ENCODE measurements at regions of chr18 and their contacts with region 1.

Region 1: DNA sequence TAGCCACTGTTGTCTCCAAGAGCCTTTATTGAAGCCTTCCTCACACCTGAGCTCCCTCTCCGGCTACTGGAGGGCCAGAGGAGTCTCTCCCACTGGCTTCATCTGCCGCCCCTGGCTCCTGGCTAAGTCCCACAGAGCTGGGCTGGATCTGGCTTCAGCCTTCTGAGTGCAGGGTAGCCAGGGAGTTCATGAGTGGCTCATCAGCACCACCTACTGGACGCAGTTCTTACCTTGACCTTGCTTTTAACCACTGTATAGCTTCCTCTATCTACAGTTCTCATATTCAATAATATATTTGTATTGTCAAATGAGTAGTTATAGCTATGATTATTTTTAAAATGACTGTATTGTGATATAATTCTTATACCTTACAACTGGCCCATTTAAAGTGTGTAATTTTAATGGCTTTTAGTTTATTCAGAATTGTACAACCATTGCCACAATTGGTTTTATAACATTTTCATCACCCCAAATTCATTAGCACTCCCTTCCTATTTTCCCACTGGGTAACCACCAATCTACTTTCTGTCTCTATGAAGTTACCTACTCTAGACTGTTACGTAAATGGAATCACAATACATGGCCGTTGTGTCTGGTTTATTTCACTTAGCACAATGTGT is 17.7 kb downstream of the CNDP1 start:
- DNase-seq: peak; percentile 84
- H3K4me3 Mint-ChIP-seq: no peak overlapping the region
- H3K27ac Mint-ChIP-seq: no peak overlapping the region
- H3K4me1 Mint-ChIP-seq: peaks cover 5% of the 10 kb centered on the region
- H3K27me3 Mint-ChIP-seq: peaks cover 40% of the 10 kb centered on the region
- CTCF ChIP-seq: peak; percentile 82

Region 2: GRCh38 chr18:72700961-72701718 is 1850.9 kb before region 1 on chr18:
- CTCF ChIA-PET with region 1: no interaction called
- POLR2A ChIA-PET with region 1: no interaction called
- intact Hi-C with region 1: loop called (anchors 2 kb)
- DNase-seq: peak; percentile 40
- H3K4me3 Mint-ChIP-seq: no peak overlapping the region
- H3K27ac Mint-ChIP-seq: no peak overlapping the region
- H3K4me1 Mint-ChIP-seq: no peaks in the 10 kb centered on the region
- H3K27me3 Mint-ChIP-seq: no peaks in the 10 kb centered on the region
- CTCF ChIP-seq: peak; percentile 61

Region 3: DNA sequence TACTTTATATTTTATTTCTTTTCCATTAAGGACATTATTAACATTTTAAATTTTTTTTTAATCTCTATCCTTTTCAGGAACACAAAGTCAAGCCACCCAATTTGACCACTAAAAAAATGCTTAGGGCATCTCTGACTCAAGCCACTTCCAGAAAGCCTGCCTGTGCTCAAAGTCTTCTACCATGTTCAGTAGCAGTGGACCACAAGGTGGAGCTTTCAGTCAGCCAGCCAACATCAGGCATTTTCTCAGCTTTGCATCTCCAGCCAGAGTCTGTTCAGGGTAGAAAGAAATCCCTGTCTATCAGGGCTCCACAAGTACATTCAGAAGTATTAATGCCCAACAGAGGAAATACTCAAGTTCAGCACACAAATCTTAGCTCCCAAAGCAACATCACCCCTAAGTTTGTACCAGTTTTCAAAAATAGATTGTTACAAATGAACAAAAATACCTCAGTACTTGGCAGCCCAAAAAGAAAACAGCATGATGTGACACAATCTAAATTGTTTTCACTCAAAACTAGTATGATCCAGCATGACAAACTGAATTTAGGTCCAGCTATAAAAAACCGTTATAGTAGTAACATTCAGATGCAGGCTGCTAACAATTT is 198.8 kb before region 1 on chr18:
- CTCF ChIA-PET with region 1: interaction called, 87 read pairs
- POLR2A ChIA-PET with region 1: interaction called, 4 read pairs
- intact Hi-C with region 1: loop called (anchors 1 kb)
- DNase-seq: peak; percentile 61
- H3K4me3 Mint-ChIP-seq: no peak overlapping the region
- H3K27ac Mint-ChIP-seq: no peak overlapping the region
- H3K4me1 Mint-ChIP-seq: no peaks in the 10 kb centered on the region
- H3K27me3 Mint-ChIP-seq: peaks cover 40% of the 10 kb centered on the region
- CTCF ChIP-seq: peak; percentile 55

Region 4: DNA sequence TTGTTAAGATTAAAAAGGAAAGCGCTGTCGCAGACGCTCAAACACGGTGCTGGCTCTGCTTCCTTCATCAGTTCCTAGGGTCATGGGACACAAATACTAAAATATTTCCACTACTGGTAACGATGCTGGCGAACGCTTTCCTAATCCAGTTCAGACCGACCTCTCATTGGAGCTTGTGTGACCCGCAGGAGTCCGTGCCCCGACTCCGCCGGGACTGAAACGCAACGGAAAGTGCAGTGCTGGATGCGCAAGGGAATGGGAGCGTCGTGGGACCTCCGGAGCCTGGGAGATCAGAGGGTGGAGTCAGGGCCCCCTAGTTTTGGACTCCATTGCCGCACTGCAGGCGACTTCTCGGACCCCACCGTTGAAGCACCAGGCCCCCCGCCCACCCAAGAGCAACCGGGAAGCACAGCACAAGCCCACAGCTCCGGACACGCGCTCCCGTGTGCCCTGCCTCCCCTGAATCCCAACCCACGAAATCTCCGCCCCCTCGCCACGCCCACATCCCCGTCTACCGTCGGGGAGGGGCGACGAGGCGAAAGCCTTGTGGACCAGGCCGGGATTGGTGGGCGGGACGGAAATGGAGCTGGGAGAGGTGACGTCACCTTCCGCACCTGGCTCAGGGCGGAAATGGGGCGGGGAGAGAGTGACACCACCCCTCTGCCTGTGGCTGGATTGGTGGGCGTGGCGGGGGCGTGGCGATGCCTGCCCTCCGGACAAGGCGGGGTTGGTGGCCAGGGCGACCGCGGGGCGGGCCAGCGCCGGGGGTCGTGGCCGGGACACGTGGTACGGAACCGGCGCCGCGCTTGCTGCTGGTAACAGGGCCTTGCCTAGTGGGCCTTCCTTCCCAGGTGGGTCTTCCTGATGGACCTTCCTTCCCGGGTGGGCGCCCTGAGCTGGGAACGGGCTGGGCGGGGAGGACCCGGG is 56.2 kb before region 1 on chr18 and contains the start of gene CNDP2:
- CTCF ChIA-PET with region 1: interaction called, 57 read pairs
- POLR2A ChIA-PET with region 1: interaction called, 8 read pairs
- intact Hi-C with region 1: loop called (anchors 2 kb)
- DNase-seq: peak; percentile 99
- H3K4me3 Mint-ChIP-seq: peak within 1 kb of the TSS; percentile 88
- H3K27ac Mint-ChIP-seq: peak within 1 kb of the TSS; percentile 88
- H3K4me1 Mint-ChIP-seq: peaks cover 22% of the 10 kb centered on the region
- H3K27me3 Mint-ChIP-seq: no peaks in the 10 kb centered on the region
- CTCF ChIP-seq: no peak
- total RNA-seq, gene CNDP2: 194 and 219 TPM in 2 replicates

Region 5: DNA sequence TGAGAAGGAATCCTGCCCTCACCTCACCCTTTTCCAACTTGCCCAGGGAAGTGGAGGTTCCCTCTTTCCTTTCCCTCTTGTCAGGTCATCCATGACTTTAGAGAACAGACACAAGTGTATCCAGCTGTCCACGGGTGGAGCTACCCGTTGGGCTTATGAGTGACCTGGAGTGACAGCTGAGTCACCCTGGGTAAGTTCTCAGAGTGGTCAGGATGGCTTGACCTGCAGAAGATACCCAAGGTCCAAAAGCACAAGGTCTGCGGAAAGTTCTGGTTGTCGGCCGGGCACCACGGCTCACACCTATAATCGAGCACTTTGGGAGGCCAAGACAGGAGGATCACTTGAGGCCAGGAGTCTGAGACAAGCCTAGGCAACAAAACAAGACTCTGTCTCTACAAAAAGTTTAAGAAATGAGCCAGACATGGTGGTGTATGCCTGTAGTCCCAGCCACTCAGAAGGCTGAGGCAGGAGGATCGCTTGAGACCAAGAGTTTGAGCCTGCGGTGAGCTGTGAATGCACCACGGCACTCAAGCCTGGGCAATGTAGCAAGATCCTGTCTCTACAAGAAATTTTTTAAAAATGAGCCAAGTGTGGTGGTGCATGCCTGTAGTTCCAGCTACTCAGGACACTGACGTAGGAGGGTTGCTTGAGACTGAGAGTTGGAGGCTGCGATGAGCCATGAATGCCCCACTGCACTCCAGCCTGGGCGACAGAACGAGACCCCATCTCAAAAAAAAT is 31.8 kb before region 1 on chr18:
- CTCF ChIA-PET with region 1: interaction called, 11 read pairs
- POLR2A ChIA-PET with region 1: interaction called, 3 read pairs
- intact Hi-C with region 1: no loop called
- DNase-seq: no peak
- H3K4me3 Mint-ChIP-seq: no peak overlapping the region
- H3K27ac Mint-ChIP-seq: no peak overlapping the region
- H3K4me1 Mint-ChIP-seq: no peaks in the 10 kb centered on the region
- H3K27me3 Mint-ChIP-seq: no peaks in the 10 kb centered on the region
- CTCF ChIP-seq: no peak

Region 6: GRCh38 chr18:74806700-74807416 is 254.8 kb after region 1 on chr18:
- CTCF ChIA-PET with region 1: no interaction called
- POLR2A ChIA-PET with region 1: no interaction called
- intact Hi-C with region 1: no loop called
- DNase-seq: peak; percentile 85
- H3K4me3 Mint-ChIP-seq: peak overlapping the region; percentile 17
- H3K27ac Mint-ChIP-seq: peak overlapping the region; percentile 75
- H3K4me1 Mint-ChIP-seq: peaks cover 21% of the 10 kb centered on the region
- H3K27me3 Mint-ChIP-seq: no peaks in the 10 kb centered on the region
- CTCF ChIP-seq: no peak

Region 7: GRCh38 chr18:74861154-74861553 is 309.1 kb after region 1 on chr18:
- CTCF ChIA-PET with region 1: no interaction called
- POLR2A ChIA-PET with region 1: no interaction called
- intact Hi-C with region 1: no loop called
- DNase-seq: no peak
- H3K4me3 Mint-ChIP-seq: no peak overlapping the region
- H3K27ac Mint-ChIP-seq: no peak overlapping the region
- H3K4me1 Mint-ChIP-seq: no peaks in the 10 kb centered on the region
- H3K27me3 Mint-ChIP-seq: no peaks in the 10 kb centered on the region
- CTCF ChIP-seq: no peak